ENCODE measurements at regions of chr20 and their contacts with region 1.

Region 1: GRCh38 chr20:37990571-37991151 is 42.6 kb downstream of the TTI1 start:
- DNase-seq: no peak

Region 2: GRCh38 chr20:37564388-37565133 is 426.1 kb before region 1 on chr20:
- intact Hi-C with region 1: loop called (anchors 5 kb)
- DNase-seq: peak; percentile 56

Region 3: DNA sequence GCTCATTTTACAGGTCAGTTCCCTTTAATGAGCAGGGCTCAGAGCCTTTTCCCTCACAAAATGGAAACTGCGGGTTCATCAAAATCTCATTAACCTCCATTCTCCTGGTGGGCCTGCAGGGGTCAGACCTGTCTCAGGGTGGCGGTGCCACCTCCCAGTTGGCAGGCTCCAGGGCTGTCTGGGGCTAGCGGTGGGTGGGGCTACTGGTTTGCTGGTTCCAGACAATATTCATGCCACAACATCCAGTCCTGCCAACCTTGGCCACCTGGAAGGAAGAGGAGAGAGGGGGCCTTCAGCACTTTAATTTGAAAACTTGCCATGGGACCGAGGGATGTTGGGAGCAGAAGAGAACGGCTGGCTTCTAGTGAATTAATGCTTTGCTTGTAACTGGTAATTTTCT is 338.7 kb before region 1 on chr20:
- intact Hi-C with region 1: loop called (anchors 10 kb)
- DNase-seq: no peak

Region 4: GRCh38 chr20:37758332-37758731 is 232.3 kb before region 1 on chr20:
- intact Hi-C with region 1: loop called (anchors 10 kb)
- DNase-seq: no peak

Region 5: GRCh38 chr20:37880726-37881591 is 109.7 kb before region 1 on chr20:
- intact Hi-C with region 1: loop called (anchors 5 kb)
- DNase-seq: peak; percentile 82

Region 6: DNA sequence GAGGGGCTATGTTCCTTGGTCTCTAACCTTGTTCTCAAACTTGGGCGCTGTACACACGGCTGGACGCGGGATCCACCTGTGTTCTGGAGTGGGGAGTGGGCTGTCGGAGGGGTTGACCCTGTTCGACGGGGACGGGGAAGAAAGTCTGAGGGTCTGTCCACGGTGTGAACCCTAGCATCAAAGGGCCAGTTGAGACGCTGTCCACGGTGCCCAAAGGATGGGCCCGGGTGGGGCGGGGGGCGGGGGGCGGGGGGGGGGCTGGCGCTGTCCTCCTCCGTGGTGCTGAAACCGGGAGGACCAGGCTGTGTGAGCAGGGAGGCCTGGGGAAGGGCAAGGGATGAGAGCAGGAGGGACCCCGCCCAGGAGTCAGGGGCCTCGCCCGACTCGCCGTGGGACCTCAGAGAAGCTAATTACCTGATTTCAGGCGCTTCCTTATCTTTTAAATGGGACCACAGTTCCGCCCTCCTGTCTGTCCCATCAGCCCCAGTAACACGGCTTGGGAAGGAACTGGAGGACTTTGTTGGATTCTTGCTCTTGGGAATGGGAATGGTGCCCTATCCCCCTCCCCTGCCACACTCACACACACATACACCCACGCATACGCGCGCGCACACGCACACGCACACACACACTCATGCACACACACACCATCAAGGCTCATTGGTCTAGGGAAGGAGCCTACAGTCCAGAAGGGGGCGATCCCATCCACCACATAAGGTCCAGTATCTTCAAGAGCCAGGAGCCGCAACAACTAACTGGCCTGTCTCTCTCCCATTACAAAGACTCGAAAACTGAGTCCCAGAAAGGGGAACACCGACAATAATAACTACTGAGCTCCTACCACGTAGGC is 88.8 kb before region 1 on chr20:
- intact Hi-C with region 1: loop called (anchors 5 kb)
- DNase-seq: no peak

Region 7: DNA sequence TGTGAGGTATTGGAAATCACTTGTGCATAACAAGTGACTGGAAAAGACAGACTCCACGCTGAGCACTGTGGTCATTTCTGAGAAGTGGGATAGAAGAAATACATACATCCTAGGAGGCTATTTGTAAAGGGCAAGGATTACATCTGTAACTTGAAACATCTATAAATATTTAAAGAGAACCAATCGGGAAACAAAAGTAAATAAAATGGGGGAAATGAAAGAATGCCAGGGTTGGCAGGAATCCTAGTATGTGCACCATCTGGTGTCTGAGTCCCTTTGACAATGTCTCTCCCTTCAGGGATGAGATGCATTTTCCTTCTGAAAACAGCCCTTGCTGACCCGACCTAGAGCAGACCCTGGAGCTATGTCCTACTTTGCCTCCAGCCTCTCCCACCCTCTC is 34.6 kb before region 1 on chr20:
- intact Hi-C with region 1: no loop called
- DNase-seq: no peak

Region 8: DNA sequence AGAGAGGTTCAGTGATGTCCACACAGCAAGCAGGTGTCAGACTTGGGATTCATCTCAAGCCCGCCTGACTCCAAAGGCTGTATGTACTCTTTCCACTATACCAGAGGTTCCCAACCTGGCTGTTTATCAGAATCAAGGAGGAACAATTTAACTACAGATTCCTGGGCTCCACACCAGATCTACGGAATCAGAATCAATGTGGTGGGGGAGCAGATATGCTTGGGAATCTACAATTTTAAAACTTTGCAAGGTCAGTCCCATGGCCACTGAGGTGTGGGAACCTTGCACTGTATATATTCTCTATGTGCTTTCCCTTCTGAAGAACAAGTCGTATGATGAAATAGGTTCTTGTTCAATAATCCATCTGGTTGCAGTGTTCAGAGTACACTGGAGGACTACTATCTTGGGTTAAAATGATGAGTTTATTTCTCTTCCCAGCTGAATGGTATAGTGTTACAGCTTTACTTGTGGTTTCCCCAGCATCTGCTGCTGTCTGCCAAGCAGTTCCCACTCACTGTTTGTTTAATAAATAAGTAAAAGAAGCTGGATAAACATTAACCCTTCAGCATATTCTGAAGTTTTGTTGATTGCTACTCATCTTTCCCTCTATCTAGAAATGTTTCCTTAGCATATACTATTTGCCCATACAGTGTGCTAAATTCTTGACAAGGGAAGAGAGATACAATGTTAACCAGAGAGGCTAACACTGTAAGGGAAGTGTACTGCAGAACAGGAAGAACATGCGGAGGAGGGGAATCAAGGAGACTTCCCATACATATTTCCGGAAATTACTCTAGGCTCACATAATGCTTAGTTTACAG is 32.7 kb after region 1 on chr20:
- intact Hi-C with region 1: no loop called
- DNase-seq: no peak

Region 9: DNA sequence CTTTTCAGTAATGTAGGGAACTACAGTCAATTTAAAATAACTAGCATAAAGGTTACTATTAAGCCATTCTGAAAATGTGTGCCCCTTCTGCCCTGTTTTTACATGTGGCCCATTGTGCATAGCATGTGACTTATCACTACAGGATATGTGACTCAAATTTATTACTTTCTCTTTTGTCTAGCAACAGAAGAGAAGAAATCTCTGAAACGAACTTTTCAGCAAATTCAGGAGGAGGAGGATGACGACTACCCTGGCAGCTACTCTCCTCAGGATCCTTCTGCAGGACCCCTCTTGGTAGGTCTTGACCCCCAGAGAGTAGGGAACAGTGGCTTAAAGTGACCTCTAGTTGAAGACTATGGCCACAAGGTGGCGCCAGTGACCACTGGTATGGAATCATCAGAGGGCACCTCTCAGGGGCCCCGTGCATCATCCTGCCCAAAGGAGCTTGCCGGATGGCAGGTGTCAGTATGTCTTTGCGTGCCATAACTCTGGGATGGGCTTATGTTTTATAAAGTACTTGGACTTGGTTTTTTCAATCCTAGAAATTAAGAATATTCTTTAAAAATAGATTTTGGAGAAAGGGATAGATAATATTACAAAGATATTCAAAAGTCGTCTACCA is 66.8 kb after region 1 on chr20:
- intact Hi-C with region 1: no loop called
- DNase-seq: peak; percentile 90